ENCODE measurements at regions of chrX and their contacts with region 1.

Region 1: GRCh38 chrX:18886344-18887161 is 97.4 kb downstream of the PHKA2 start:
- DNase-seq: peak; percentile 36
- ATAC-seq: peak; percentile 81
- H3K4me3 Mint-ChIP-seq: peak overlapping the region; percentile 91
- H3K27ac Mint-ChIP-seq: peak overlapping the region; percentile 94
- H3K4me1 Mint-ChIP-seq: peaks cover 25% of the 10 kb centered on the region
- H3K27me3 Mint-ChIP-seq: no peaks in the 10 kb centered on the region
- CTCF ChIP-seq: no peak

Region 2: DNA sequence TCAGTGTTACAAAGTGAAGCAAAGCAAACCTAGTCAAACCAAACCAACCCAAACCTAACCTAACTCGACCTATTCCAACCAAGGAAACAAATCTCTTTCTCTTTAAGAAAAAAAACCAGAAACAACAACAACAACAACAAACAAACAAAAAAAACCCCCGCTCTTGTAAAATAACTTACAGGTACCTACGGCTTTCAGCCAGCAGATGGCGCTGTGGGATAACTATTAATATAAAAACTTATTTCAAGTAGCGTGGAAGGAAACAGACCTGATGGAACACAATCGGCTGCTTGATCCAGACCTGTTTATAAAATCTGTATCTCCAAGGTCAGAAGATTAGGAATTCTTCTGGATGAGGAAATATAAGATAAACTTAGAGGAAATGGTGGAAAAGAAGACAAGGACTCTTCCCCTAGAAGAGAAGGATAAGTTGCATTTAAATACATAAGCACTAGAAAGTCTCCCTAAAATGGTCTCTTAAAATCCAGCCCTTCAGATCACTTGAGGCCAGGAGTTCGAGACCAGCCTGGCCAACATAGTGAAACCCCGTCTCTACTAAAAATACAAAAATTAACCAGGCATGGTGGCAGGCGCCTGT is 495.5 kb before region 1 on chrX:
- CTCF ChIA-PET with region 1: no interaction called
- POLR2A ChIA-PET with region 1: no interaction called
- intact Hi-C with region 1: loop called (anchors 1 kb)
- DNase-seq: peak; percentile 14
- ATAC-seq: peak; percentile 37
- H3K4me3 Mint-ChIP-seq: no peak overlapping the region
- H3K27ac Mint-ChIP-seq: no peak overlapping the region
- H3K4me1 Mint-ChIP-seq: no peaks in the 10 kb centered on the region
- H3K27me3 Mint-ChIP-seq: no peaks in the 10 kb centered on the region
- CTCF ChIP-seq: no peak

Region 3: GRCh38 chrX:18425199-18426003 is 461.2 kb before region 1 on chrX and contains the start of gene CDKL5:
- CTCF ChIA-PET with region 1: no interaction called
- POLR2A ChIA-PET with region 1: interaction called, 14 read pairs
- intact Hi-C with region 1: loop called (anchors 1 kb)
- DNase-seq: peak; percentile 82
- ATAC-seq: peak; percentile 93
- H3K4me3 Mint-ChIP-seq: peak within 1 kb of the TSS; percentile 86
- H3K27ac Mint-ChIP-seq: peak within 1 kb of the TSS; percentile 77
- H3K4me1 Mint-ChIP-seq: peaks cover 16% of the 10 kb centered on the region
- H3K27me3 Mint-ChIP-seq: no peaks in the 10 kb centered on the region
- CTCF ChIP-seq: no peak
- total RNA-seq, gene CDKL5: 3.7 and 3.8 TPM in 2 replicates

Region 4: GRCh38 chrX:18674788-18675735 is 211.5 kb before region 1 on chrX:
- CTCF ChIA-PET with region 1: no interaction called
- POLR2A ChIA-PET with region 1: interaction called, 5 read pairs
- intact Hi-C with region 1: loop called (anchors 1 kb)
- DNase-seq: peak; percentile 75
- ATAC-seq: peak; percentile 88
- H3K4me3 Mint-ChIP-seq: peak overlapping the region; percentile 82
- H3K27ac Mint-ChIP-seq: peak overlapping the region; percentile 85
- H3K4me1 Mint-ChIP-seq: peaks cover 12% of the 10 kb centered on the region
- H3K27me3 Mint-ChIP-seq: no peaks in the 10 kb centered on the region
- CTCF ChIP-seq: no peak

Region 5: DNA sequence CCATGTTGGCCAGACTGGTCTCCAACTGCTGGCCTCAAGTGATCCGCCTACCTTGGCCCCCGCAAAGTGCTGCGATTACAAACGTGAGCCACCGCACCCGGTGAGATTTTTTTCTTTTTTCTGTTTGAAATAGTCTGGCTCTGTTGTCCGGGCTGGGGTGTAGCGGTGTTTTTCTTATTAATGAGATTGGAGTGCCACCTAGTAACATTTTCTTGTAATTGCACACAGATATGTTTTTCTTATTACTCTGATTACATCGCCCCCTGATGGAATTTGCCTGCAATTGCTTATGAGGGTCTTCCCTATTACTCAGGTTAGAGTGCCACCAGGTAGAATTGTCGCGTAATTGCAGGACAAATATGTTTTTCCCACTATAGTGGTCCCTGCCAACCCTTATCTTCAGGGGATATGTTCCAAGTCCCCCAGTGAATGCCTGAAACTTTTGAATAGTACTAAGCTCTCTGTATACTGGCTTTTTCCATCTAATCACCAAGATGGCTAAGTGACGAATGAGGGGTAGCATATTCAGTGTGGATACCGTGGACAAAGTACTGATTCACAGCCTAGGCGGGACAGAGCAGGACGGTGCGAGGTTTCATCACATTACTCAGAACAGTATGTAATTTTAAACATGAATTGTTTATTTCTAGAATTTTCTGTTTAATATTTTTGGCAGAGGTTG is 448.5 kb after region 1 on chrX:
- CTCF ChIA-PET with region 1: interaction called, 3 read pairs
- POLR2A ChIA-PET with region 1: no interaction called
- intact Hi-C with region 1: loop called (anchors 2 kb)
- DNase-seq: no peak
- ATAC-seq: no peak
- H3K4me3 Mint-ChIP-seq: no peak overlapping the region
- H3K27ac Mint-ChIP-seq: no peak overlapping the region
- H3K4me1 Mint-ChIP-seq: no peaks in the 10 kb centered on the region
- H3K27me3 Mint-ChIP-seq: no peaks in the 10 kb centered on the region
- CTCF ChIP-seq: no peak